ENCODE measurements at regions of chr4 and their contacts with region 1.

Region 1: GRCh38 chr4:139651282-139652194 is 14.1 kb upstream of the MGST2 start:
- DNase-seq: peak; percentile 73
- H3K4me3 ChIP-seq: no peak overlapping the region
- H3K27ac ChIP-seq: no peak overlapping the region
- H3K4me1 ChIP-seq: no peaks in the 10 kb centered on the region
- H3K27me3 ChIP-seq: no peaks in the 10 kb centered on the region
- CTCF ChIP-seq: peak; percentile 91

Region 2: GRCh38 chr4:139603576-139604387 is 47.8 kb before region 1 on chr4:
- intact Hi-C with region 1: loop called (anchors 1 kb)
- DNase-seq: peak; percentile 62
- H3K4me3 ChIP-seq: no peak overlapping the region
- H3K27ac ChIP-seq: no peak overlapping the region
- H3K4me1 ChIP-seq: no peaks in the 10 kb centered on the region
- H3K27me3 ChIP-seq: no peaks in the 10 kb centered on the region
- CTCF ChIP-seq: peak; percentile 59

Region 3: DNA sequence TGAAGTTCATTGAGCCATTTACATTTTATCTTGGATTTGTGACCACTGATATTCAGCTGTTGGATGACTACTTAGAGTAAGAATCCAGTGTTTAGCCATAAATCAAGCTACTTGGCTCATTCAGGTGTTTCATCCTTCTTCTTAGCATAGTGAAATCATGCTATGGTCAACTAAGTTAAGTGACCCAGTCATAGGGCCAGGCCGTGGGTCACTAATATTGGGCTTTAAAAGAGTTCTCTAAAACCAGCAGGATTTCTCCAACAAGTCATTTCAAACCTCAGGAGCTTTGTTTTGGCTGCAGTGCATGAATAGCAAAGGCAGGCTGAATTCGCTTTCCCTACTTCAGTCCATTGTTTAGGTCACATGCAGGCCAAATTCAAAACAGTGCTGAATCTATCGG is 321.5 kb after region 1 on chr4:
- intact Hi-C with region 1: no loop called
- DNase-seq: no peak
- H3K4me3 ChIP-seq: no peak overlapping the region
- H3K27ac ChIP-seq: no peak overlapping the region
- H3K4me1 ChIP-seq: peaks cover 3% of the 10 kb centered on the region
- H3K27me3 ChIP-seq: no peaks in the 10 kb centered on the region
- CTCF ChIP-seq: no peak

Region 4: DNA sequence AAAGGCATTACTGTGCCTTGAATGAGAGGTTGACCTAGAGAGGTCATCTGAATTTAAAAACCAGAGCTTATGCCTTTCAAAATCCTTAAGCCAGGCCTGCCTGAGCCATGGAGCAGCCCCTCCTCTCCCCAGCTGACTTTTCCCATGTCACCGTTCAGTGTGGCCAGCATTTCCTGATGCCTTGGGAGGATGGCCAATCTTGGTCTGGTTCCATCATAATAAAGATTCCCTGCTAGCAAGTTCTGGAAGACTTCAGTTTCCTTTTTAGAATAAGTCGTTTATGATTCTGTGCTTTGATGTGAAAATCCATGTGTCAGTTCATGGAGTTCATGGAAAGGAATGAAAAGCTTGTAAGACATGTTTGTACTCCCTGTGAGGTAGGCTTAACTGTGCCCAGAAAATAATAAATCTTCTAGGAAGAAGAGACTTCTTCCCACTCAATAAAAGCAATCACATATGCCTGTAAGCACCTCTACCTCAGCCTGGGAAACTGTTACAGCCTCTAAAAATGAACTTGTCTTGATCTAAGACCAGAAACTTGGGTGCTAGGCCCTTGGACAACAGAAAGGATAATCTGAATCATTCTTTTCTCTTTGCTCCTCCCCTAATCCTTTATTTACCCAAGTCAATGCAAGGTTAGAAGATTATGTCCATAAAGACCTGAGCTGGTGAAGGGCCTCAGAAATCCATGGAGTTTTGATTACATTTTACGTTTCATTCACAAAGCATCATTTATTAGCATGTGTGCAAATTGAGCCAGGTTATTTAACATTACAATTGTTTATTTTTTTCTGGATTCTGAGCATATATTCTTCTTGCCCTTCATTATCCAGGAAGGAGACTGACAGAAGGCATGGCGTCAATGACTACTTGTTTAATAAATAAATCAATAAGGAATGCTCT is 1188.6 kb after region 1 on chr4:
- intact Hi-C with region 1: no loop called
- DNase-seq: no peak
- H3K4me3 ChIP-seq: no peak overlapping the region
- H3K27ac ChIP-seq: no peak overlapping the region
- H3K4me1 ChIP-seq: no peaks in the 10 kb centered on the region
- H3K27me3 ChIP-seq: no peaks in the 10 kb centered on the region
- CTCF ChIP-seq: no peak